Heart left ventricle (tissue), 16 donors: ENCODE measurements at regions of chr4 and their contacts with region 1.

Region 1: DNA sequence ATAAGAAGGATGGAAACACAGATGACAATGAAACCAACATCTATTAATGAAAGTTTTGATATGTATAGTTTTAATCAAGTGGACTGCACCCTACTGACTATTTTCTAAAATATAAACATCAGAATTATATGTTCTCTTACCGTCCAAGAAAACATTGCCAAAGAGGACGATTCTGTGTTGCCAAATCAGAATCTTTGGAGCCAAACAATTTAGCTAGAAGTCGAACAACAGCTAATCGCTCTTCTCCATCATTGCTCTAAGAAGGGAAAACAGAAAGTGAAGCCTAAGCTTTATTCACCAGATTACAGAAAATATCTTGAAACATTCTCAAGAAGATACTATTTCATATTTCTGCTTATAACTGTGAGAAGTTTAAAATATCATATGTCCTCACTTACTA is 64.2 kb downstream of the PDS5A start:
- DNase-seq: no peak
- ATAC-seq: no peak
- H3K4me3 ChIP-seq: no peak overlapping the region
- H3K27ac ChIP-seq: no peak overlapping the region
- H3K4me1 ChIP-seq: peaks cover 0 to 3% (median 0%) of the 10 kb centered on the region in 12 donors
- H3K27me3 ChIP-seq: no peaks in the 10 kb centered on the region
- CTCF ChIP-seq: no peak
- POLR2A ChIP-seq: no peak

Region 2: GRCh38 chr4:39559626-39560025 is 353.8 kb before region 1 on chr4:
- intact Hi-C with region 1: no loop called
- DNase-seq: no peak
- ATAC-seq: no peak
- H3K4me3 ChIP-seq: no peak overlapping the region
- H3K27ac ChIP-seq: peak overlapping the region in 2 of 12 donors; percentile 9 to 44
- H3K4me1 ChIP-seq: peaks cover 0 to 11% (median 0%) of the 10 kb centered on the region in 12 donors
- H3K27me3 ChIP-seq: no peaks in the 10 kb centered on the region
- CTCF ChIP-seq: no peak
- POLR2A ChIP-seq: no peak

Region 3: DNA sequence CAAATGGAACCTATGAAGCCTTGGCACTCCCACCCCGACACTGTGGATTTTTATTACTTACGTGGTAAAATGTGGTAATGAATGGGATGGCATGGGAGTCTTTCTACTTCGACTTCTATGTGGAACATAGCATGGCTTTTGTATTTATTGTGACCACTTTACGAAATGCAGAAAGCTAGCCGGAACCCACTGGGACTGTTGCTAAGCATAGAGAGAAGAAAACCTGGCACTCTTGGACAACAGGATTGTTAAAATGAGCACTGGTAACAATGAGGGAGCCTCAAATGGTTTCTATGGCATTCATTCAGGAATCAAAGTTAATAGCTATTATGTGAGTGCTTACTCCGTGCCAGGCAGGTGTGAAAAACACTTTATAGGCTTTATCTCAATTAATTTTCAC is 49.1 kb before region 1 on chr4:
- intact Hi-C with region 1: loop called in 1 of 10 experiments (anchors 10 kb)
- DNase-seq: no peak
- ATAC-seq: no peak
- H3K4me3 ChIP-seq: no peak overlapping the region
- H3K27ac ChIP-seq: no peak overlapping the region
- H3K4me1 ChIP-seq: no peaks in the 10 kb centered on the region
- H3K27me3 ChIP-seq: no peaks in the 10 kb centered on the region
- CTCF ChIP-seq: no peak
- POLR2A ChIP-seq: no peak

Region 4: GRCh38 chr4:40003986-40004385 is 90.5 kb after region 1 on chr4:
- intact Hi-C with region 1: no loop called
- DNase-seq: no peak
- ATAC-seq: peak in 3 of 4 donors; percentile 31 to 82 (median 54)
- H3K4me3 ChIP-seq: no peak overlapping the region
- H3K27ac ChIP-seq: no peak overlapping the region
- H3K4me1 ChIP-seq: peaks cover 0 to 14% (median 0%) of the 10 kb centered on the region in 12 donors
- H3K27me3 ChIP-seq: no peaks in the 10 kb centered on the region
- CTCF ChIP-seq: no peak
- POLR2A ChIP-seq: no peak